ENCODE measurements at regions of chr11 and their contacts with region 1.

Region 1: GRCh38 chr11:9314291-9315036 is at the start of gene TMEM41B:
- DNase-seq: peak; percentile 98
- ATAC-seq: peak; percentile 97
- H3K4me3 ChIP-seq: peak within 1 kb of the TSS; percentile 81 to 94 (median 86)
- H3K4me3 Mint-ChIP-seq: peak within 1 kb of the TSS; percentile 100
- H3K27ac ChIP-seq: peak within 1 kb of the TSS; percentile 82 to 92
- H3K27ac Mint-ChIP-seq: peak within 1 kb of the TSS; percentile 99
- H3K4me1 ChIP-seq: peaks cover 14 to 17% of the 10 kb centered on the region in 2 donors
- H3K4me1 Mint-ChIP-seq: peaks cover 43% of the 10 kb centered on the region
- H3K27me3 ChIP-seq: no peaks in the 10 kb centered on the region
- H3K27me3 Mint-ChIP-seq: peaks cover 1% of the 10 kb centered on the region
- CTCF ChIP-seq: no peak
- total RNA-seq, gene TMEM41B: 38.5 and 43.9 TPM in 2 replicates

Region 2: GRCh38 chr11:8688414-8689362 is 625.8 kb before region 1 on chr11:
- CTCF ChIA-PET with region 1: no interaction called
- POLR2A ChIA-PET with region 1: no interaction called
- intact Hi-C with region 1: loop called (anchors 2 kb)
- DNase-seq: peak; percentile 91
- ATAC-seq: peak; percentile 93
- H3K4me3 ChIP-seq: peak overlapping the region; percentile 56 to 90 (median 77)
- H3K4me3 Mint-ChIP-seq: peak overlapping the region; percentile 98
- H3K27ac ChIP-seq: peak overlapping the region; percentile 83
- H3K27ac Mint-ChIP-seq: peak overlapping the region; percentile 98
- H3K4me1 ChIP-seq: peaks cover 26 to 30% of the 10 kb centered on the region in 2 donors
- H3K4me1 Mint-ChIP-seq: peaks cover 47% of the 10 kb centered on the region
- H3K27me3 ChIP-seq: no peaks in the 10 kb centered on the region
- H3K27me3 Mint-ChIP-seq: no peaks in the 10 kb centered on the region
- CTCF ChIP-seq: no peak

Region 3: GRCh38 chr11:9265211-9266131 is 49.0 kb before region 1 on chr11 and contains the start of gene DENND5A:
- CTCF ChIA-PET with region 1: no interaction called
- POLR2A ChIA-PET with region 1: interaction called, 3 read pairs
- intact Hi-C with region 1: loop called (anchors 1 kb)
- DNase-seq: peak; percentile 73
- ATAC-seq: peak; percentile 74
- H3K4me3 ChIP-seq: peak within 1 kb of the TSS; percentile 64 to 94 (median 91)
- H3K4me3 Mint-ChIP-seq: peak within 1 kb of the TSS; percentile 97
- H3K27ac ChIP-seq: peak within 1 kb of the TSS; percentile 62 to 84
- H3K27ac Mint-ChIP-seq: peak within 1 kb of the TSS; percentile 94
- H3K4me1 ChIP-seq: peaks cover 11 to 19% of the 10 kb centered on the region in 2 donors
- H3K4me1 Mint-ChIP-seq: peaks cover 34% of the 10 kb centered on the region
- H3K27me3 ChIP-seq: no peaks in the 10 kb centered on the region
- H3K27me3 Mint-ChIP-seq: no peaks in the 10 kb centered on the region
- CTCF ChIP-seq: no peak
- total RNA-seq, gene DENND5A: 41.3 and 41.6 TPM in 2 replicates

Region 4: GRCh38 chr11:9363954-9364912 is 49.8 kb after region 1 on chr11:
- CTCF ChIA-PET with region 1: no interaction called
- POLR2A ChIA-PET with region 1: interaction called, 3 read pairs
- intact Hi-C with region 1: loop called (anchors 1 kb)
- DNase-seq: peak; percentile 83
- ATAC-seq: peak; percentile 95
- H3K4me3 ChIP-seq: peak overlapping the region; percentile 63 to 84 (median 74)
- H3K4me3 Mint-ChIP-seq: peak overlapping the region; percentile 89
- H3K27ac ChIP-seq: peak overlapping the region; percentile 69 to 73
- H3K27ac Mint-ChIP-seq: peak overlapping the region; percentile 87
- H3K4me1 ChIP-seq: peaks cover 0 to 9% of the 10 kb centered on the region in 2 donors
- H3K4me1 Mint-ChIP-seq: peaks cover 9% of the 10 kb centered on the region
- H3K27me3 ChIP-seq: no peaks in the 10 kb centered on the region
- H3K27me3 Mint-ChIP-seq: no peaks in the 10 kb centered on the region
- CTCF ChIP-seq: no peak

Measured in B cell (primary cell).